Panc1 (cell line): ENCODE measurements at regions of chr11 and their contacts with region 1.

Region 1: GRCh38 chr11:126989942-126990715 is 10.4 kb downstream of the KIRREL3 start:
- DNase-seq: peak; percentile 39
- ATAC-seq: peak; percentile 92
- H3K4me3 ChIP-seq: no peak overlapping the region
- H3K27ac ChIP-seq: no peak overlapping the region
- H3K4me1 ChIP-seq: no peaks in the 10 kb centered on the region
- H3K27me3 ChIP-seq: peaks cover 27% of the 10 kb centered on the region
- CTCF ChIP-seq: peak; percentile 99

Region 2: DNA sequence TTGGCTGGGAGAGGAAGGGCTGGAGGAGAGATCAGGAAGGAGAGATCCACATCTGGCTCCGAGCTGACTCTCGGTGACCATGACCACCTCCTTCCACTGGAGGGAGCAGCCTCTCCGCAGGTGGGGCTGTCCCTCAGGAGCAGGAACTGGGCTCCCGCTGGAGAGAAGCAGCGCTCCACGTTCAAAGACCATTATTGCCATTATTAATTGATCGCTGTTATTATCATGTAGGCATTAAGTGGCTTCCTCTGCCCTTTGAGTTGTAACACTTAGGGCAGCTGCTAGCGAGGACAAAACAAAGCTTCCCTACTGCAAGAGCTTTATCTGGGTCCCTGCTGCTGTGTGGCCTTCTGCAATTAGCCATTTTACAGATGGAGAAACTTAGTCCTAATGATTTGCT is 382.8 kb before region 1 on chr11:
- CTCF ChIA-PET with region 1: interaction called, 4 read pairs
- POLR2A ChIA-PET with region 1: no interaction called
- in situ Hi-C with region 1: no loop called
- intact Hi-C with region 1: loop called (anchors 2 kb)
- DNase-seq: peak; percentile 30
- ATAC-seq: peak; percentile 97
- H3K4me3 ChIP-seq: no peak overlapping the region
- H3K27ac ChIP-seq: no peak overlapping the region
- H3K4me1 ChIP-seq: no peaks in the 10 kb centered on the region
- H3K27me3 ChIP-seq: peaks cover 4% of the 10 kb centered on the region; the same call in 1 of the 2 replicates
- CTCF ChIP-seq: peak; percentile 91

Region 3: DNA sequence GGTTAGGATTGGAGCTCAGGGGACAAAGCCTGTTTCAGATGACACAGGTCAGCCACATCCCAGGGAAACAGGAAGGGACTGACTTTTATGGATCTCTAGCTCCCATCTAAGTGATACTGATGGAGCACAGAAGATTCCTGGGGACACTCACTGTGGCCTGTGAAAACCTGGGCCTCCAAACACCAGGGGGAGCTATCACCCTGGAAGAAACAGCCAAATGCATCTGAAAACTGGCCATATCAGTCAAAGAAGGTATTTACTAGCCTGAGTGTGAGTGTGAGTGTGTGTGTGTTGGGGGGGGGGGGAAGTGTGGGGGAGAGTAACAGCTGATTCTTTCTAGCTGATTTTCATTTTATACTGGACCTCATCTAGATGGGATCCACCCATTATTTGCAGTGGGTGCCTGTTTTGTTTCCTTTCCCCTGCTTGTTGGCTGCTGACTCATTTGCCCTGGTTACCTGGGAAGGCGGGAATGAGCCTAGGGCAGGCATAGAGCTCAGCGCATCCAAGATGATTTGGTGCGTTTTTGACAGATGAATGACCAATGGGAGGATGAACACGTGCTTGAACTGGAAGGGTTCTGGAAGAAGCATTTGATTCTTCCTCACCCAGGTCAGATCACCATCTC is 273.6 kb before region 1 on chr11:
- CTCF ChIA-PET with region 1: interaction called, 7 read pairs
- POLR2A ChIA-PET with region 1: no interaction called
- in situ Hi-C with region 1: no loop called
- intact Hi-C with region 1: loop called (anchors 2 kb)
- DNase-seq: peak; percentile 18
- ATAC-seq: peak; percentile 56; the same call in 1 of the 2 replicates
- H3K4me3 ChIP-seq: no peak overlapping the region
- H3K27ac ChIP-seq: no peak overlapping the region
- H3K4me1 ChIP-seq: no peaks in the 10 kb centered on the region
- H3K27me3 ChIP-seq: peaks cover 14% of the 10 kb centered on the region
- CTCF ChIP-seq: peak; percentile 80